ENCODE measurements at regions of chr16 and their contacts with region 1.

Region 1: GRCh38 chr16:88437373-88437964 is 15.6 kb upstream of the ZFPM1 start:
- DNase-seq: peak; percentile 93
- ATAC-seq: peak; percentile 84
- H3K4me3 Mint-ChIP-seq: no peak overlapping the region
- H3K27ac Mint-ChIP-seq: no peak overlapping the region
- H3K4me1 Mint-ChIP-seq: no peaks in the 10 kb centered on the region
- H3K27me3 Mint-ChIP-seq: no peaks in the 10 kb centered on the region
- CTCF ChIP-seq: peak; percentile 93

Region 2: DNA sequence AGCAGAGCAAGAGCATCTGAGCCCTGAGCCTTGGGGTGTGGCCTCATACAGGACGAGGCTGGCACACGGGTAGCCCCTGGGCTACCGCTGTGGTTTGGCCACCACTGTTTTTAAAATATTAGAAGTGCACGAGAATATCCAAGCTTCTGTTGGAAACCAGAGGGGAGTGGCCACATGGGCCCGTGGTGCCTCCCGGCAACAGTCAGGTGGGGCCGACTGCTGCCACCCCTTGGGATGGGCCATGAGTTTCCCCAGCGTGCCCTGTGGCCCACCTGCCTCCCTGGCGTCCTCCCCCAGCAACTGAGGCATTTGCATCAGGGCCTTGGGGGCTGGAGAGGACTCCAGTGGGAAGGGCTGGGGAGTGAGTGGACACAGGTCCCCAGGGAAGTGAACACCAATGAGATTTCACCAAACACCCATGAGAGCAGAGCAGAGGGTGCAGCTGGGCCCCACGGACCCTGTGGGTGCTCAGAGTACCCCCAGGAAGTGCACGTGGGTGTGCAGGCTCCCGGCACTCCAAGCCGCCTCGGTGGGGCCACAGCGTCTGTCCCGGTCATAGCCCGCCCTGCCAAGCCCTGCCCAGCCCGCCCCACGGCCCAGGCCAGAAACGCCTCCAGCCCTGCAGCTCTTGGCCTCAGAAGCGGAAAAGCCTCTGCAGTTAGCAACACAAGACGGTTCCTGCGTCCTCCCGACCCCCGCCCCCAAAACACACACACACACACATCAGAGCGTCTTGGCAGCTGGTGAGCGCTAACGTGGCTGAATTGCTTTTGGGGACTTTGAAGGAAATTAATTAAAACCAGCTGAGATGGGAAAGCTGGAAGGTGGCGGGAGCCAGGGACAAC is 32.0 kb before region 1 on chr16:
- CTCF ChIA-PET with region 1: interaction called, 16 read pairs
- POLR2A ChIA-PET with region 1: no interaction called
- DNase-seq: no peak
- ATAC-seq: no peak
- H3K4me3 Mint-ChIP-seq: no peak overlapping the region
- H3K27ac Mint-ChIP-seq: no peak overlapping the region
- H3K4me1 Mint-ChIP-seq: no peaks in the 10 kb centered on the region
- H3K27me3 Mint-ChIP-seq: no peaks in the 10 kb centered on the region; the same call in 1 of the 2 replicates
- CTCF ChIP-seq: no peak

Region 3: GRCh38 chr16:88452482-88453216 is 15.2 kb after region 1 on chr16:
- CTCF ChIA-PET with region 1: interaction called, 13 read pairs
- POLR2A ChIA-PET with region 1: no interaction called
- DNase-seq: peak; percentile 99
- ATAC-seq: peak; percentile 84
- H3K4me3 Mint-ChIP-seq: peak overlapping the region; percentile 67
- H3K27ac Mint-ChIP-seq: no peak overlapping the region
- H3K4me1 Mint-ChIP-seq: peaks cover 8% of the 10 kb centered on the region
- H3K27me3 Mint-ChIP-seq: peaks cover 60% of the 10 kb centered on the region
- CTCF ChIP-seq: no peak

Region 4: DNA sequence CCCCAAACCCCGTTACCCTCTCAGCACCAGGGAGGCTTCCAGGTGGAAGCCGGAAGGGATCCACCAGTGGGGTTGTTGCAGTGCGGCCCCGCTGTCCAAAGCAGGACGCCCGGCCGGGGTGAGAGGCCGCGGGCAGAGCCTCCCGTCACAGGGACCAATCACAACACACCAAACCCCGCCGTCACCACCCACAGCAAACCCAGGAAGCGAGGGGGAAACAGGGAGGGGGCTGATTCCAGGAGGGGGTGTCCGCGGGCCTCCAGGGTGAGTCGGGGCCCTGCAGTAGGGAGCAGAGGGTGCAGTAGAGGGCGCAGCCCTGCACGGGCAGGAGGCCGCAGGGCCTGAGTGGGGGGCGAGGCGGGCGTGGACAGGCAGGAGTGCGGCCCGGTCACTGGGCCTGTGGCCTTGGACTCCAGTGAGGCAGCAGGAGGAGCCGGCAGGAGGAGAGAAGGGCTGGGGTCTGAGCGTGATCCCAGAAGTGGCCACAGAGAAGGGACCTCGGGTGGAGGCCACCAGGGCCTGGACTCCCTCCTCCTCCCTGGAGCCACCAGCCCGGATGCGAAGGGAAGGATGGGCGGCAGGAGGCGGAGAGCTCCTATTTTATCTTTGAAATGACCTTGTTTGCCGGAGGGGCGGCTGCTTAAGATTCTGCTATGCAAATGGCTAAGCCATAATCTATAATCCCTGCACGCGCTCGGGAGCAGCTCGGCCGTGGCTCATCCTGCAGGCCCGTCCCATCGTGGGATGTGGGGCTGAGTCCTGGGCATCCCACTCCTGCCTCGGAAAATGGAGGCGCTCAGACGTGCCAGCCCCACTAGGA is 57.1 kb after region 1 on chr16:
- CTCF ChIA-PET with region 1: interaction called, 22 read pairs
- POLR2A ChIA-PET with region 1: no interaction called
- DNase-seq: no peak
- ATAC-seq: peak; percentile 30
- H3K4me3 Mint-ChIP-seq: no peak overlapping the region
- H3K27ac Mint-ChIP-seq: no peak overlapping the region
- H3K4me1 Mint-ChIP-seq: no peaks in the 10 kb centered on the region
- H3K27me3 Mint-ChIP-seq: no peaks in the 10 kb centered on the region
- CTCF ChIP-seq: no peak

Region 5: DNA sequence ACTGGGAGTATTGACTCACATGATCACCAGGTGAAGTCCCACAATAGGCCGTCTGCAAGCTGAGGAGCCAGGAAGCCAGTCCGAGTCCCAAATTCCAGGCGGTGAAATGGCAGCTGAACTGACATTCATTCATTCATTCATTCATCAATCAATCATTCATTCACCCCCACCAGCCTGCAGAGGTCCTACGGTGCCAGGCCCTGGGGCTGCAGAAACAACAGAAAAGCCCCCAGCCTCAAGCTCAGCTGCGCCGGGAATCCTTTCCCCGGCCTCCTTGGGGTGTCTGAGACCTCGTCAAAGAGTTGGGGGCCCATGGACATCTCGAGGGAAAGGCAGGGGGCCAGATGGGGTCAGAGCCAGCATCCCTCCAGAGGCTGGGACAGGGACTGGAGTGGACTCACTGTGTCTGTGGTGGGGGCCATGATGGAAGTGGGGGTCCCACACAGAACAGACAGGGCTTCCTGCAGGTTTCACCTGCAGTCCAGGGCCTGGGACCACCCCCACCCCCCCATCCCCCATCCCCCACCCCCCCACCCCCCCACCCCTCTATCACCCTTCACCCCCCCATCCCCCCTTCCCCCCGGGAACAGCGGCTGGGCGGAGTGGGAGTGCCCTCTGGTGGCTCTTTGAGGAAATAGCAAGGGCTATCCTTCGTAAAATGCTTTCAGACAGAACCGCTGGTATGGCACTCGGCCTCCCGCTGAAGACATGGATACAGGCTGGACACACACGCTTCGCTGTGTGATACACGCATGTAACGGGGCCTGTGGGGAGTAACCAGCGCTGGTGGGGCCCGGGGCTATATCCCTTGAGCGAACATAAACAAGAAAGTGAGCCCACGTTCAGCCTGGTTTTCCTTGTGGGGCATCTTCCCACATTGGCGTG is 124.3 kb after region 1 on chr16:
- CTCF ChIA-PET with region 1: interaction called, 10 read pairs
- POLR2A ChIA-PET with region 1: no interaction called
- DNase-seq: peak; percentile 61
- ATAC-seq: peak; percentile 30
- H3K4me3 Mint-ChIP-seq: peak overlapping the region; percentile 33
- H3K27ac Mint-ChIP-seq: no peak overlapping the region
- H3K4me1 Mint-ChIP-seq: peaks cover 3% of the 10 kb centered on the region; the same call in 1 of the 2 replicates
- H3K27me3 Mint-ChIP-seq: peaks cover 17% of the 10 kb centered on the region
- CTCF ChIP-seq: peak; percentile 45

Region 6: GRCh38 chr16:88662843-88663606 is 225.6 kb after region 1 on chr16 and contains the start of gene MVD:
- CTCF ChIA-PET with region 1: no interaction called
- POLR2A ChIA-PET with region 1: no interaction called
- DNase-seq: peak; percentile 98
- ATAC-seq: peak; percentile 97
- H3K4me3 Mint-ChIP-seq: peak within 1 kb of the TSS; percentile 83
- H3K27ac Mint-ChIP-seq: peak within 1 kb of the TSS; percentile 93
- H3K4me1 Mint-ChIP-seq: peaks cover 19% of the 10 kb centered on the region
- H3K27me3 Mint-ChIP-seq: no peaks in the 10 kb centered on the region; the same call in 1 of the 2 replicates
- CTCF ChIP-seq: no peak
- total RNA-seq, gene MVD: 96.9 to 113 TPM (median 109 TPM) in 3 replicates